ENCODE measurements at regions of chr19 and their contacts with region 1.

Region 1: DNA sequence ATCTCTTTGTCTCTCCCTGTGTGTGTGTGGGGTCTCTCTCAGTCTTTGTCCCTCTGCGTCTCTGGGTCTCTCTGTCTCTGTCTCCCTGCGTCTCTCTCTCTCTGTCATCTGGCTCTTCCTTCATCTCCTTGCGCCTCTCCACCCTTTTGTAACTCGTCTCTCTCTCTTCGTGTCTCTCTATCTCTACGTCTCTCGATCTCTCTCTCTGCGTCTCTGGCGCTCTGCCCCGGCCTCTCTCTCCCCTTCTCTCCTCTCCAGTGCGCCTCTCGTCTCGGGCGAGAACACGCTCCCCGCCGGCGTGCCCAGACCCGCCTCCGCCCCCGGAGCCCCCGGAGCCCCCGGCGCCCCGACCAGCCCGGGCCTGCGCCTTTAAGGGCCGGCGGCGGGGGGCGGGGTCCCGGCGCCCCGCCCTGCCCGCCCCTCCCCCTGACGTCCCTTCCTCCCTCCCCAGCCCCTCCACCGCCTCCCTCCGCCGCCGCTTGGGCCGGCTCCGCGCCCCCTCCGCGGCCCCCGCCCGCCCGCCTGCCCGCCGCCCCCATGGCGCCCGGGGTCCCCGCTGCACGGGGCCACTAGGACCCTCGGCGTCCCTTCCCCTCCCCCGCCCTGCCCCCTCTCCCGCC is at the start of gene MARK4:
- DNase-seq: peak in 1 of 2 donors; percentile 70
- H3K4me3 ChIP-seq: peak within 1 kb of the TSS; percentile 97 to 99
- H3K27ac ChIP-seq: peak within 1 kb of the TSS; percentile 81 to 82
- H3K4me1 ChIP-seq: peaks cover 0 to 56% (median 43%) of the 10 kb centered on the region in 4 donors
- H3K27me3 ChIP-seq: peaks cover 0 to 4% of the 10 kb centered on the region in 2 donors
- CTCF ChIP-seq: no peak

Region 2: DNA sequence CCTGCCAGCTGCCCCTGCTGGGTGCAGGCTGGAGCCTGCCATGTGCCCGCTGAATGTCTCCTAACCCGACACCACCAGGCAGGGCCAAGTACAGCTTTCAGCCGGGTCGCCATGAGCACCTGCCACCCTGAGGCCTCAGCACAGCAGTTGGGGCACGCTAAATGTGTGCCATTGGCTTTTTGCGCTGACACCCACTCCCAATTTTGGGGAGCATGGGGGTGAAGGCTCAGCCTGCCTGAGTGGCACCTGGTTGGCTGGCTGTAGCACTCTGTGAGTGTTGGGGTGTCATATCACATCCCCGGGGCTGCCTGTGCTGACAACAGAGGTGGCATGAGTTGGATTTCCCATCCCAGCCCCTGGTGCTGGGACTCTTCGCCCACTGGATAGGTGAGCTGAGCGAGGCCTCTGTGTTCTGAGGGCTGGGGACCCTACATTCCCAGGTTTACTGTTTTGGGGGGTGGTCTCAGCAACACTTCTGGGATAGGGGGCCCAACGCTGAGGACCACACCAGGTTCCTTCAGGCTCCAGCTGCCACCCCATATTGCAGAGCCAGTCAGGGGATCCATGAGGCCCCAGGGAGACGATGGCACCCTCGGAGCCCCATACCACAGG is 256.9 kb before region 1 on chr19:
- intact Hi-C with region 1: loop called (anchors 10 kb)
- DNase-seq: no peak
- H3K4me3 ChIP-seq: no peak overlapping the region
- H3K27ac ChIP-seq: no peak overlapping the region
- H3K4me1 ChIP-seq: no peaks in the 10 kb centered on the region
- H3K27me3 ChIP-seq: no peaks in the 10 kb centered on the region
- CTCF ChIP-seq: no peak

Measured in tibial artery (tissue), 4 donors.